Mammary epithelial cell (primary cell): ENCODE measurements at regions of chr2 and their contacts with region 1.

Region 1: DNA sequence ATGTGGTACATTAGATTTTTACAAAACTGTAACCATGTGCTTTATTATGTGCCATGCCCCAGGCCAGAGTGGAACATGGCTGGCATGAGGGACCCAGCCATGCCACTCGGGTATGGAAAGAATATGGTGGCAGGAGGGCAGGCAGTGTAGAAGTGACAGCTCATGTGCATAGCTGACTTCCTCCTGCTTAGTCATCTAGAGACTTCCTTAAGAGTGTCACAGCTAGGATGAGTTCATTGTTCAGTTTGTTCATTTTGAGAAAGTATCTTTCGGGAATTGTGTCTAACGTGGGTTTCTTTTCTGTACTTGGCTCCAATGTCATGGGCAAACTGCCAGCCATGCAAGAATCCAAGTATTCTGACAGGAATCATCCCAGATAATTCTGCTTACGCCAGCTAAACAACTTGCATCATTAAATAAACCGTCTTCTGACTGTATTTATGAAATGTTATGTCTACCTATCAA is 94.3 kb upstream of the ITGB6 start:
- DNase-seq: peak; percentile 42
- H3K4me3 ChIP-seq: no peak overlapping the region
- H3K27ac ChIP-seq: peak overlapping the region; percentile 78
- H3K4me1 ChIP-seq: peaks cover 34% of the 10 kb centered on the region
- H3K27me3 ChIP-seq: no peaks in the 10 kb centered on the region
- CTCF ChIP-seq: no peak

Region 2: DNA sequence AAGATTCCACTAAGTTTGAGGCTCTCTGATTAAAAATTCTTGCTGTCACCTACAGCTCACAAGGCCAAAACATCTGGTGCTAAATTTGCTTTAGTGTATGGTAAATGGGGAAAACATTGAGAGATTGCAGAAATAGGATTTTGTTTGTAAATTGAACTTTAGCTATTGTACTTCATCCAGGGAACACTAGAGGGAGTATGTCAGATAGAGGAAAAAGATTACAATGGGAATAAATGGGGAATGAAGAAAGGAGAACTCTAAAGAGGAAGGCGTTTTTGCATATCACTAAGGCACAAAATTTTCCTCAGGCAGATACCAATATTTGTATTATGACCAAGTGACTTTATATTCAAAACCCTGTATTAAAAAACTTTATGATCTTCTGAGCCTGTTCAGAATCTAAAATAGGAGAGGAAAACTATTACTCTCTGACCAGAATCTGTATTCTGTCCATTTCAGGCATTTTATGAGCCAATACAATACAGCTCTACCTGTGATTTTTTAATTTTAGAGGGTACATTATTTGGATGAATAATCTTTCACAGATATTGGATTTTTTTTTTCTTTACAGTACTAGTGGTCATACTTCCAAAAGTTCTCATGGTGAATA is 42.0 kb before region 1 on chr2:
- CTCF ChIA-PET with region 1: no interaction called
- dilution Hi-C with region 1: loop called (anchors 5 kb)
- in situ Hi-C with region 1: no loop called
- intact Hi-C with region 1: no loop called
- DNase-seq: no peak
- H3K4me3 ChIP-seq: no peak overlapping the region
- H3K27ac ChIP-seq: no peak overlapping the region
- H3K4me1 ChIP-seq: peaks cover 16% of the 10 kb centered on the region
- H3K27me3 ChIP-seq: no peaks in the 10 kb centered on the region
- CTCF ChIP-seq: peak; percentile 76 to 83

Region 3: GRCh38 chr2:160332318-160332717 is 37.9 kb after region 1 on chr2:
- CTCF ChIA-PET with region 1: no interaction called
- dilution Hi-C with region 1: no loop called
- in situ Hi-C with region 1: no loop called
- intact Hi-C with region 1: no loop called
- DNase-seq: no peak
- H3K4me3 ChIP-seq: no peak overlapping the region
- H3K27ac ChIP-seq: no peak overlapping the region
- H3K4me1 ChIP-seq: no peaks in the 10 kb centered on the region
- H3K27me3 ChIP-seq: no peaks in the 10 kb centered on the region
- CTCF ChIP-seq: no peak

Region 4: GRCh38 chr2:160876765-160877164 is 582.4 kb after region 1 on chr2:
- CTCF ChIA-PET with region 1: no interaction called
- dilution Hi-C with region 1: no loop called
- in situ Hi-C with region 1: no loop called
- intact Hi-C with region 1: no loop called
- DNase-seq: peak; percentile 27
- H3K4me3 ChIP-seq: no peak overlapping the region
- H3K27ac ChIP-seq: no peak overlapping the region
- H3K4me1 ChIP-seq: no peaks in the 10 kb centered on the region
- H3K27me3 ChIP-seq: no peaks in the 10 kb centered on the region
- CTCF ChIP-seq: no peak